Activated T-helper 1 cell treated with anti-CD3 and anti-CD28 coated beads, Interleukin-12 subunit alpha, Interleukin-12 subunit beta, Interleukin-2, Interleukin-4 antibody, amounts not matched to agents 30 ng/mL and 10 ng/mL and 1 ng/mL, durations not matched to agents 14 hours and 24 hours and 36 hours (primary cell): ENCODE measurements at regions of chr1 and their contacts with region 1.

Region 1: GRCh38 chr1:224497714-224498573 is 63.3 kb upstream of the WDR26 start:
- DNase-seq: peak; percentile 62
- H3K4me3 Mint-ChIP-seq: peak overlapping the region; percentile 59
- H3K27ac Mint-ChIP-seq: peak overlapping the region; percentile 97
- H3K4me1 Mint-ChIP-seq: peaks cover 63% of the 10 kb centered on the region
- H3K27me3 Mint-ChIP-seq: peaks cover 3% of the 10 kb centered on the region

Region 2: GRCh38 chr1:223460566-223461189 is 1037.3 kb before region 1 on chr1:
- intact Hi-C with region 1: no loop called
- DNase-seq: no peak
- H3K4me3 Mint-ChIP-seq: no peak overlapping the region
- H3K27ac Mint-ChIP-seq: no peak overlapping the region
- H3K4me1 Mint-ChIP-seq: no peaks in the 10 kb centered on the region
- H3K27me3 Mint-ChIP-seq: peaks cover 2% of the 10 kb centered on the region

Region 3: GRCh38 chr1:224168859-224169380 is 329.0 kb before region 1 on chr1:
- intact Hi-C with region 1: loop called (anchors 1 kb)
- DNase-seq: peak; percentile 59
- H3K4me3 Mint-ChIP-seq: peak overlapping the region; percentile 60
- H3K27ac Mint-ChIP-seq: peak overlapping the region; percentile 76
- H3K4me1 Mint-ChIP-seq: peaks cover 38% of the 10 kb centered on the region
- H3K27me3 Mint-ChIP-seq: peaks cover 2% of the 10 kb centered on the region

Region 4: GRCh38 chr1:224356685-224357625 is 141.0 kb before region 1 on chr1 and contains the start of gene CNIH4:
- intact Hi-C with region 1: loop called (anchors 5 kb)
- DNase-seq: peak; percentile 89
- H3K4me3 Mint-ChIP-seq: peak within 1 kb of the TSS; percentile 93
- H3K27ac Mint-ChIP-seq: peak within 1 kb of the TSS; percentile 93
- H3K4me1 Mint-ChIP-seq: peaks cover 28% of the 10 kb centered on the region
- H3K27me3 Mint-ChIP-seq: no peaks in the 10 kb centered on the region
- total RNA-seq, gene CNIH4: 80.7 and 82.3 TPM in 2 replicates

Region 5: GRCh38 chr1:224513787-224514209 is 15.9 kb after region 1 on chr1:
- intact Hi-C with region 1: loop called (anchors 1 kb)
- DNase-seq: peak; percentile 71
- H3K4me3 Mint-ChIP-seq: no peak overlapping the region
- H3K27ac Mint-ChIP-seq: no peak overlapping the region
- H3K4me1 Mint-ChIP-seq: peaks cover 31% of the 10 kb centered on the region
- H3K27me3 Mint-ChIP-seq: no peaks in the 10 kb centered on the region

Region 6: GRCh38 chr1:224592636-224593582 is 95.0 kb after region 1 on chr1:
- intact Hi-C with region 1: no loop called
- DNase-seq: no peak
- H3K4me3 Mint-ChIP-seq: no peak overlapping the region
- H3K27ac Mint-ChIP-seq: no peak overlapping the region
- H3K4me1 Mint-ChIP-seq: no peaks in the 10 kb centered on the region
- H3K27me3 Mint-ChIP-seq: peaks cover 6% of the 10 kb centered on the region

Region 7: GRCh38 chr1:224623743-224624333 is 125.9 kb after region 1 on chr1:
- intact Hi-C with region 1: loop called (anchors 5 kb)
- DNase-seq: peak; percentile 83
- H3K4me3 Mint-ChIP-seq: peak overlapping the region; percentile 70
- H3K27ac Mint-ChIP-seq: peak overlapping the region; percentile 94
- H3K4me1 Mint-ChIP-seq: peaks cover 48% of the 10 kb centered on the region
- H3K27me3 Mint-ChIP-seq: peaks cover 39% of the 10 kb centered on the region

Region 8: DNA sequence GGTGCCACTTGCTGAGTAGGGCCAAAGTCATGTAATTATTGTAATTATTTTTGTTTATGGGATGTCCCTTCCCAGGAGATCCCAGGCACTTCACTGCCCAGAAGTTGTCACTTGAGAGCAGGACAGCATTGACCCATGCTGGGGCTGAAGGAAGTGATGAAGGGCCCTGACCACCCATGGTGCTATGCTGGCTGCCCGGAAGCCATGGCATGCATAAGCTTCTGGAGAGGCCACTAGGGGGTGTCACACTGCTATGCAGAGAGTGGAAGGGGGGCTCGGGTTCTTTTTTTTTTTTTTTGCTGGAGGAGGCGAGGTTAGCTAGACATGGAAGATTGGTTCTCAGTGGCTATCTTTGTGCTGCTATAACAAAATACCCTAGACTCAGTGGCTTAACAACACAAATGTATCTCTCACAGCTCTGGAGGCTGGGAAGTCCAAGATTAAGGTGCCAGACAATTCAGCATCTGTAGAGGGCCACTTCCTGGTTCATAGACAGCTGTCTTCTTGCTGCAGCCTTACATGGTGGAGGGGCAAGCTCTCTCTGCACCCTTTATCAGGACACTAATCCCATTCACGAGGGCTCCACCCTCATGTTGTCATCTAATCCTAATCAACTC is 203.1 kb after region 1 on chr1:
- intact Hi-C with region 1: no loop called
- DNase-seq: no peak
- H3K4me3 Mint-ChIP-seq: no peak overlapping the region
- H3K27ac Mint-ChIP-seq: no peak overlapping the region
- H3K4me1 Mint-ChIP-seq: no peaks in the 10 kb centered on the region
- H3K27me3 Mint-ChIP-seq: no peaks in the 10 kb centered on the region